ENCODE measurements at regions of chr7 and their contacts with region 1.

Region 1: DNA sequence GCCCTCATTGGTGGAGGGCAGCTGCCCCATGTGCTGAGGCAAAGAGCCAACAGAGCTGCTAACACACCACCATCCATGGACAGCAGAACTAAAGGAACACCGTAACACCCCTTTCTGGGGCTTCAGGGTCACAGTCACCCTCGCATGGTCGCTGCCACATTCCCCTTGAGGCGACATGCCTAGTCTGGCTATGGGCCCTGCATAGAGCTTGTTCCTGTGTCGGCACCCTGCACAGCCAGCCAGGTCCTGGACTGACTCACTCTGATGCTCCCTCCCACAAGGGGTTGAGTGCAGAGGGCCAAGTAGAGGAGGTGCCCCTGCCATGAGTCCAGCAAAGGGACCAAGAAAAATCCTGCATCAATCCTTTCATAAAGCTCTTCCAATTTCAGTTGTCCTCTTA is 77.8 kb downstream of the GNAT3 start:
- DNase-seq: no peak
- H3K4me3 ChIP-seq: no peak overlapping the region
- H3K27me3 ChIP-seq: no peaks in the 10 kb centered on the region
- CTCF ChIP-seq: no peak

Region 2: DNA sequence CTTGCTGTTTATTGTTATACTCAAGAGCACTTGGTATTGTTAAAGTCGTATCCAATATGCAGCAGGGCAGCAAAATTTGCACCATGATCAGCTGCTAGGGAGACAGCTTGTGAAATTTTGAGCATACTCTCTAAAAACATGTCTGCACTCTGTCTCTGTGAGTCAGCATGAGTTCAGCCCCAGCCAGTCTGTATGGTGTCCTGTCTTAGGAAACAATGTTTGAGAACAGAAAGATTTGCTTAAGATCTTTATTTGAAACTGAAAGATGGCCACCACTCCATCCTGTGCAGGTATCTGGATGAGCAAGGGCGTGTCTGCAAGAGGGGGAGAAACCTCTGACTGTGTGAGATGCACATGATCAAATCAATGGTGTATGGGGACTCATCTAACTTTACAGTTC is 202.3 kb before region 1 on chr7:
- CTCF ChIA-PET with region 1: no interaction called
- POLR2A ChIA-PET with region 1: no interaction called
- DNase-seq: no peak
- H3K4me3 ChIP-seq: no peak overlapping the region
- H3K27me3 ChIP-seq: no peaks in the 10 kb centered on the region
- CTCF ChIP-seq: no peak

Region 3: DNA sequence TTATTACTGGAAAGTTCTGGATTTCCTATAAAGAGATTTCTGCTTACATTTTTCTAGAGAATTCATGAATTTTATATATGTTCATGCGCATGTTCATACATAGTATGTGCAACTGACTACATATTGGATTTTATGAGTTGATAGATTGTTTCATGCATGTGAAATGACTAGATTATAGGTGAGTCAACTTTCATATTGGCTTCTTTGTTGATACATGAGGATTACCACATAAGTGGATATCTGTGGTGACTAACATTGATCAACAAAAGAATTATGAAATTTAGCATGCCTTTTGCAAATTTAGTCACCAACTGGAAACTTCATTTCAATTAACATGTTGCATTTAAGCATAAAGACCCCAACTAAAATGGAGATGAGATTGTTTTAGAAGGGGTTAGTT is 21.2 kb before region 1 on chr7:
- CTCF ChIA-PET with region 1: no interaction called
- POLR2A ChIA-PET with region 1: no interaction called
- DNase-seq: no peak
- H3K4me3 ChIP-seq: no peak overlapping the region
- H3K27me3 ChIP-seq: no peaks in the 10 kb centered on the region
- CTCF ChIP-seq: no peak

Region 4: DNA sequence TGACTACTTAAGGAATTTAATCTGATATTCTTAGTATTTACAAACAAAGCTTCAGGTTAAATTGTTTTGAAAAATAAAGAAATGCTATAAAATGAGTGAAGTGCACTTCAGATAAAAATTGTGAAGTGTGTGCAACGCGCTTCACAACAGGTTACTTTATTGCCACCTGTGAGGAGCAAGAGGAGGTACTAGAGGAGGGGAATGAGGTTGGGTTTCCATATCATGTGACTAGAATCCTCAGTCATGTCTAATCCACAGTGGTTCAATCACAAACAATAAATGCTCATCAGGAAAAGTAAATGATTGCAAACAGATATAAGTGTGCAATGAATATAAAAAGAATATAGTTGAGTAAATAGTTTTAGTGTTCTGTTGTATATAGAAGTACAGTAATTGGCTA is 169.9 kb after region 1 on chr7:
- CTCF ChIA-PET with region 1: no interaction called
- POLR2A ChIA-PET with region 1: interaction called, 11 read pairs
- DNase-seq: no peak
- H3K4me3 ChIP-seq: no peak overlapping the region
- H3K27me3 ChIP-seq: no peaks in the 10 kb centered on the region
- CTCF ChIP-seq: no peak

Measured in BJ (cell line).